Breast epithelium (tissue), 4 donors: ENCODE measurements at regions of chr3 and their contacts with region 1.

Region 1: GRCh38 chr3:17518189-17519059 is 224.0 kb downstream of the TBC1D5 start:
- DNase-seq: no peak
- H3K4me3 ChIP-seq: no peak overlapping the region
- H3K27ac ChIP-seq: no peak overlapping the region
- H3K4me1 ChIP-seq: no peaks in the 10 kb centered on the region
- H3K27me3 ChIP-seq: no peaks in the 10 kb centered on the region
- CTCF ChIP-seq: no peak
- POLR2A ChIP-seq: no peak

Region 2: GRCh38 chr3:18264853-18265252 is 746.4 kb after region 1 on chr3:
- intact Hi-C with region 1: loop called (anchors 5 kb)
- DNase-seq: no peak
- H3K4me3 ChIP-seq: no peak overlapping the region
- H3K27ac ChIP-seq: no peak overlapping the region
- H3K4me1 ChIP-seq: no peaks in the 10 kb centered on the region
- H3K27me3 ChIP-seq: no peaks in the 10 kb centered on the region
- CTCF ChIP-seq: no peak
- POLR2A ChIP-seq: no peak